Left cardiac atrium (tissue), 4 donors: ENCODE measurements at regions of chr4 and their contacts with region 1.

Region 1: GRCh38 chr4:15882675-15883086 is 55.9 kb downstream of the FGFBP1 start:
- DNase-seq: peak; percentile 40
- ATAC-seq: peak; percentile 82 to 83

Region 2: GRCh38 chr4:15805583-15806517 is 76.8 kb before region 1 on chr4:
- intact Hi-C with region 1: loop called in 1 of 2 experiments (anchors 5 kb)
- DNase-seq: no peak
- ATAC-seq: peak; percentile 76 to 82

Region 3: DNA sequence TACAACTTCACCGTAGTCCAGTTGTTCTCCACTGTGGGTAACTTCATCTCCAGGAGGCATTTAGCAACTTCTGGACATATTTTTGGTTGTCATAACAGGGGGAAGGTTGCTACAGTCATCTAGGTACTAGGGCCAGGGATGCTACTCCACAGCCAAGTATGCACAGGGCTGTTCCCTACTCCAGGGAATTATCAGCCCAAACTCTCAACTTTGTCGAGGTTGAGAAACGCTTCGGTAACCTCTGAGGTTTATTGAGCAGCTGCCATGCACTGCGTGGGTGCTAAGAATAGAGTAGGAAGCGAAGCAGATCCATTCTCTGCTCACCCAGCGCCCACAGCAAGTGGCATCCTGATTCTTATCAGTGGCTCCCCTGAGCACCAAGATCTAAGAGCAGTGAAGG is 47.6 kb after region 1 on chr4:
- intact Hi-C with region 1: no loop called
- DNase-seq: no peak
- ATAC-seq: peak; percentile 77 to 87

Region 4: GRCh38 chr4:16026160-16026761 is 143.6 kb after region 1 on chr4:
- intact Hi-C with region 1: no loop called
- DNase-seq: no peak
- ATAC-seq: peak; percentile 35 to 49

Region 5: GRCh38 chr4:16264798-16265197 is 382.1 kb after region 1 on chr4:
- intact Hi-C with region 1: loop called in 1 of 2 experiments (anchors 10 kb)
- DNase-seq: no peak
- ATAC-seq: peak; percentile 67 to 75